Left cardiac atrium (tissue), 4 donors: ENCODE measurements at regions of chr16 and their contacts with region 1.

Region 1: GRCh38 chr16:51146256-51146924 is 4.7 kb downstream of the SALL1 start:
- DNase-seq: no peak
- ATAC-seq: no peak

Region 2: DNA sequence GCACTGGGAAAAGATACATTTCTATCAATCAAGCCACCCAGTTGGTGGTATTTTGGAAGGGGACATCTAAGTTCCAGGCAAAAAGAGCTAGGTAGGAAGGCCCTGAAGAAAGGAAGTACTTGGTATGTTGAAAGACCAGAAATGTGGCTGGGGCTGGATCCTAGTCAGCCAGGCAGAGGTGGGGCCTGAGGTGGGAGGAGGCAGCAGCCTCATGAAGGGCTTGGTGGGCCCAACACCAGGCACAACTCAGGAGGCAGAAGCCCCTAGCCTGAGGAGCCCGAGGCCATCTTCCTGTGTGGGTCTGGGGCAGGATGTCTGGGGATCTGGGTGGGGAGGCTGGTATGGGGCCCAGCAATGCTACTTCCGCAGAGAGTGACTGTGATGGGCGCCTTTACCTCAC is 101.2 kb before region 1 on chr16:
- intact Hi-C with region 1: no loop called
- DNase-seq: no peak
- ATAC-seq: no peak

Region 3: GRCh38 chr16:51267681-51268080 is 121.3 kb after region 1 on chr16:
- intact Hi-C with region 1: no loop called
- DNase-seq: no peak
- ATAC-seq: no peak

Region 4: GRCh38 chr16:51762081-51762996 is 615.9 kb after region 1 on chr16:
- intact Hi-C with region 1: loop called in 1 of 2 experiments (anchors 5 kb)
- DNase-seq: peak; percentile 80
- ATAC-seq: peak; percentile 86 to 92